ENCODE measurements at regions of chr4 and their contacts with region 1.

Region 1: DNA sequence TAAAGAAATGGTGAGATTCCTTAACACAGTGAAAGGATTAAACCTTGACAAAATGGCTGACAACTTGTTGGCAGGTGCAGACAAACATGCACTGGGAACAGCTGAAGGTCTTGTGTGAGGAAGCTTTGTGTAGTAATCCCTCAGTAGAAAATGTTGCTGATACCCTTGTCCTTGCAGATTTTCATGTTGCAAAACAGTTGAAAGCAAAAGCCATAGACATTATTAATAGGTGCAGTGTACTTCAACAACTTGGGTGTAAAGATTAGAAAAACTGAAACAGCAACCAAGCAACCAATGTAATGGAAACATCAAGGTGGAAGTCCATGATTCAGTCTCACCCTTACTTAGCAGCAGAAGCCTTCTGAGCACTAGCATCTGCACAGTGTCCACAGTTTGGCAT is 29.8 kb downstream of the UGT2B7 start:
- DNase-seq: no peak
- ATAC-seq: no peak

Region 2: DNA sequence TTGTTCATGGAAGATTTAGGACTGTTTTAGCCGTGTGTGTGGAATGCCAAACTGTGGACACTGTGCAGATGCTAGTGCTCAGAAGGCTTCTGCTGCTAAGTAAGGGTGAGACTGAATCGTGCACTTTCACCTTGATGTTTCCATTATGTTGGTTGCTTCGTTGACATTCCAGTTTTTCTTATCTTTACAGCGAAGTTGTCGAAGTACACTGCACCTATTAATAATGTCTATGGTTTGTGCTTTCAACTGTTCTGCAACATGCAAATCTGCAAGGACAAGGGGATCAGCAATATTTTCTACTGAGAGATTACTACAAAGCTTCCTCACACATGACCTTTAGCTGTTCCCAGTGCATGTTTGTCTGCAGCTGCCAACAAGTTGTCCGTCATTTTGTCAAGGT is 242.2 kb before region 1 on chr4:
- intact Hi-C with region 1: loop called (anchors 10 kb)
- DNase-seq: no peak
- ATAC-seq: no peak

Region 3: GRCh38 chr4:69044247-69044646 is 81.8 kb before region 1 on chr4:
- intact Hi-C with region 1: no loop called
- DNase-seq: no peak
- ATAC-seq: no peak